ENCODE measurements at regions of chrX and their contacts with region 1.

Region 1: GRCh38 chrX:109485470-109486340 is 3.8 kb upstream of the GUCY2F start:
- DNase-seq: no peak
- H3K4me3 ChIP-seq: no peak overlapping the region
- H3K27ac ChIP-seq: no peak overlapping the region
- H3K4me1 ChIP-seq: no peaks in the 10 kb centered on the region
- H3K27me3 ChIP-seq: peaks cover 0 to 4% (median 0%) of the 10 kb centered on the region in 4 donors
- CTCF ChIP-seq: peak; percentile 88 to 92 (median 91)
- EP300 ChIP-seq: no peak
- POLR2A ChIP-seq: no peak

Region 2: DNA sequence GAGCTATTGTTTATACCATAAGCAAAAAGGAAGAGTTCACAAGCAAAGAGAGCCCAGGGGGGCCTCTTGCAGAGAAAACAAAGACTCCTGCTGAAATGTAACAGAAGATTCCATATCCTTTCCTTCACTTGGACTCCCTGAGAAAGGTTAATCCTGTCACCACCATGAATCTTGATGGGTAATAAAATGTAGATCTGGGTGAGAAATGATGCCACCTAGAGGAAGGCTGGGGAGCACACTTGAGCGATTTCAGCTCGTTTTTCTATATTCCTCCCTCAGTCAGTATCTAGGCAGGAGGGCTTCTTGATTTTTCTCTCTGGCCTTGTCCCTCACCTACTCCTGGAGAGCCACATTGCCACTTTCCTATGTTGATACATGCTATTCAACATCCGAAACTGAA is 149.5 kb after region 1 on chrX:
- intact Hi-C with region 1: loop called (anchors 5 kb)
- DNase-seq: no peak
- H3K4me3 ChIP-seq: no peak overlapping the region
- H3K27ac ChIP-seq: no peak overlapping the region
- H3K4me1 ChIP-seq: no peaks in the 10 kb centered on the region
- H3K27me3 ChIP-seq: no peaks in the 10 kb centered on the region
- CTCF ChIP-seq: peak in 2 of 3 experiments; percentile 24 to 34
- EP300 ChIP-seq: no peak
- POLR2A ChIP-seq: no peak

Region 3: GRCh38 chrX:109886122-109886761 is 400.5 kb after region 1 on chrX:
- intact Hi-C with region 1: loop called (anchors 5 kb)
- DNase-seq: no peak
- H3K4me3 ChIP-seq: no peak overlapping the region
- H3K27ac ChIP-seq: no peak overlapping the region
- H3K4me1 ChIP-seq: peaks cover 0 to 7% (median 5%) of the 10 kb centered on the region in 4 donors
- H3K27me3 ChIP-seq: no peaks in the 10 kb centered on the region
- CTCF ChIP-seq: peak; percentile 43 to 55 (median 48)
- EP300 ChIP-seq: no peak
- POLR2A ChIP-seq: no peak